ENCODE measurements at regions of chr15 and their contacts with region 1.

Region 1: GRCh38 chr15:25863111-25863967 is at the start of gene ATP10A:
- DNase-seq: peak; percentile 68
- H3K4me3 Mint-ChIP-seq: peak within 1 kb of the TSS; percentile 95
- H3K27ac Mint-ChIP-seq: peak within 1 kb of the TSS; percentile 91
- H3K4me1 Mint-ChIP-seq: peaks cover 52% of the 10 kb centered on the region
- H3K27me3 Mint-ChIP-seq: peaks cover 9% of the 10 kb centered on the region
- total RNA-seq, gene ATP10A: 42.8 and 47.9 TPM in 2 replicates

Region 2: DNA sequence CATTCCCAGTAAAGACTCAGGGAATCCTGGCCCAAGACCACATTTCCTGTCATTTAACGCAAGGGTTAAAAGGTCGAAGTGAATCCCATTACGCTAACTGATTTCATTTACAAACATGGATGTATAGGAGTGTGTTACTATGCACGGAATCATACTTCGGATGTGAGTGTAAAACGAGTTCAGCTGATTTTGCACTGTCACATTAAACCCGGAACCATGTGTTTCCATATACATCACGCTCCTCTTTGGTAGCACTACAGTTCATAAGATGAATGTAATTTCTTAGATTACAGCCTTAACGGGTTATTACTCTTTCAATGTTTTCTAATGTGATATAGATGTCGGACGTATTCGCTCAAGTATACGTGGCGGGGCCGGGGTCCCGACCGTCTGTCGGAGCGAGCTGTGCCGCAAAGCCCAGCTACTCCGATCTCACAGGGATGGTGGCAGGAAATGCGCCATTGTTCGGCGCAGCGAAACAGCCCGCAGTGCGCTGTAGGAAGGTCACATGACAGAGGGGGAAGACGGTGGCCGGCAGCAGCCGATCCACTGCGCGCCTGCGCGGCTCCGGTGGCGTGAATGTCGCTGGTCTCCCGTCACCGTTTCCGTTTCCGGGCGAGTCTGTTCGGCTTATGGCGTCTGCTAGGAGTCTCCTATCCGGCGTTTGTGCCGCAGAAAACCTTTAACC is 1090.5 kb before region 1 on chr15:
- intact Hi-C with region 1: no loop called
- DNase-seq: peak; percentile 34
- H3K4me3 Mint-ChIP-seq: peak overlapping the region; percentile 86
- H3K27ac Mint-ChIP-seq: peak overlapping the region; percentile 69
- H3K4me1 Mint-ChIP-seq: no peaks in the 10 kb centered on the region
- H3K27me3 Mint-ChIP-seq: no peaks in the 10 kb centered on the region

Region 3: DNA sequence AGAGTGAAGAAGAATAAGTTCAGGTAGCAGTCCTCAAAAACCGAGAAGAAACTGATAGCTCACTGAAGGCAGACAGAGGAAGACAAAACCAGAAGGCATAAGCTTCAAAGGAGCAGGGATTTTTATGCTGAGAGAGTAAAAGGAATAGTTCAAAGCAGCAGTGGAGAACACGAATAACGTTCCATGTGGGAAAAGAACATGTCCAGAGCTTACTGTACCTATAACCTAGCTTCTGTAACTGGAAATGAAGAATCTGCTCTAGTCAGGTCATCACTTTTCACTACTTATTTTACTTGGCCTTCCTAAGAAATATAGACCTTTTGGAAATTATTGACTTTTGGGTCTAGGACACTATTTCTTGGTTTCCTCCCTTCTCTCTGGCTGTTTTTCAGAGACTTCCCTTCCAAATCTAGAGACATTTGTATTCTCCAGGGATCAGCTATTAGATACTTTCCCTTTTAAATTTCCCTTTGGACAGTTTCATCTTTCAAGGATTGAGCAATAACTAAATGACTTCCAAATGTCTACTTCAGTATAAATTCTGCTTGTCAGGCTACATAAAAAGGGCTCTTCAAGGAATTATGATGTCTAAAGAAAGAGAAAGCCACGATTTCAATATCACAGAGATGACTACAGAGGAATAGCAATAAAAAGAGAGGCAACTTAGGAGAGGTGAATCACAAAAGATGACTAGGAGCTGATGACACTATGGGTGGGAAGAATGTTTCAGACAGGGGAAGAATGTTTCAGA is 471.2 kb before region 1 on chr15:
- intact Hi-C with region 1: no loop called
- DNase-seq: no peak
- H3K4me3 Mint-ChIP-seq: no peak overlapping the region
- H3K27ac Mint-ChIP-seq: no peak overlapping the region
- H3K4me1 Mint-ChIP-seq: peaks cover 20% of the 10 kb centered on the region
- H3K27me3 Mint-ChIP-seq: no peaks in the 10 kb centered on the region

Region 4: GRCh38 chr15:25790000-25790660 is 73.2 kb before region 1 on chr15:
- intact Hi-C with region 1: loop called (anchors 1 kb)
- DNase-seq: peak; percentile 33
- H3K4me3 Mint-ChIP-seq: no peak overlapping the region
- H3K27ac Mint-ChIP-seq: peak overlapping the region; percentile 87
- H3K4me1 Mint-ChIP-seq: peaks cover 56% of the 10 kb centered on the region
- H3K27me3 Mint-ChIP-seq: no peaks in the 10 kb centered on the region

Region 5: GRCh38 chr15:25805031-25805430 is 58.3 kb before region 1 on chr15:
- intact Hi-C with region 1: no loop called
- DNase-seq: no peak
- H3K4me3 Mint-ChIP-seq: no peak overlapping the region
- H3K27ac Mint-ChIP-seq: no peak overlapping the region
- H3K4me1 Mint-ChIP-seq: peaks cover 22% of the 10 kb centered on the region
- H3K27me3 Mint-ChIP-seq: no peaks in the 10 kb centered on the region